ENCODE measurements at regions of chr15 and their contacts with region 1.

Region 1: GRCh38 chr15:78604420-78604819 is 16.4 kb downstream of the CHRNA3 start:
- DNase-seq: no peak
- ATAC-seq: no peak
- H3K4me3 ChIP-seq: no peak overlapping the region
- H3K27ac ChIP-seq: no peak overlapping the region
- H3K4me1 ChIP-seq: no peaks in the 10 kb centered on the region
- H3K27me3 ChIP-seq: no peaks in the 10 kb centered on the region
- CTCF ChIP-seq: no peak
- EP300 ChIP-seq: no peak
- POLR2A ChIP-seq: no peak
- RAD21 ChIP-seq: no peak

Region 2: GRCh38 chr15:78654272-78654671 is 49.9 kb after region 1 on chr15:
- CTCF ChIA-PET with region 1: no interaction called
- POLR2A ChIA-PET with region 1: no interaction called
- RAD21 ChIA-PET with region 1: no interaction called
- SMC1A ChIA-PET with region 1: no interaction called
- in situ Hi-C with region 1: loop called (anchors 5 kb)
- intact Hi-C with region 1: no loop called
- DNase-seq: no peak
- ATAC-seq: no peak
- H3K4me3 ChIP-seq: no peak overlapping the region
- H3K27ac ChIP-seq: no peak overlapping the region
- H3K4me1 ChIP-seq: no peaks in the 10 kb centered on the region
- H3K27me3 ChIP-seq: no peaks in the 10 kb centered on the region; a peak in 1 of 4 replicates
- CTCF ChIP-seq: no peak
- EP300 ChIP-seq: no peak
- POLR2A ChIP-seq: no peak
- RAD21 ChIP-seq: no peak